Activated CD4-positive, alpha-beta memory T cell treated with anti-CD3 and anti-CD28 coated beads for 36 hours (primary cell): ENCODE measurements at regions of chr7 and their contacts with region 1.

Region 1: DNA sequence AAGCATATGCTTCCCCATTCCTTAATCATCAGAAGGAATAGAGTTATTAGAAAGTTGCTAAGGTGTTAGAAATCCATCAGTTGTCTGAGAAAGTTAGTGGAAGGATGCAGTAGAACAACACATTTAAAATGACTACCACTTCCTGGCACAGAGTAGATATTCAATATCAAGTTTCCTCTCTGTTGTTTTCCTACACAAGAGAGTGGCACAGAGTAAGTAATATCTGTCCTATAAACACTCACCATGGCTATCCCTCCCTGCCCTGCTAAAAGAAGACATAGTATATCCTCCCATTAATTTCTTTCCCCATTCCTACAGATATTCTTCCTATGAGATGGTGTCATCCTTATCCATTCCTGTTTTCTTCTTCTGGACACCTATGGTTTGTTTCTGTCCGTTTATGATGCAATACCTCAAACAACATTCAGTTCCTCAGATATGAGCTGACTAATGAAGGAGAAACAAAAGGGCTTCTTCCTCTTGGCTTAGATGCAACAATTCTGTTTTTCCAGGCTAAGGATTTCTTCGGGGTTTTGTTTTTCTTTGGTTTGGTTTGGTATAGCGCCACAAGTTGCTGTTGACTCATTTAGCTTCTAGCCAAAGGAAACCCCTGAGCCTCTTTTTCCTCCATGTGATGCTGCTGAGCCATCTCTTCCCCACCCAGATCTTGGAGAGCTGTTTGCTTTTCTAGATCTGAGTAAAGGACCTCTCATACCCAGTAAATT is 32.9 kb upstream of the BPGM start:
- DNase-seq: peak; percentile 61
- H3K4me3 Mint-ChIP-seq: no peak overlapping the region
- H3K27ac Mint-ChIP-seq: no peak overlapping the region
- H3K4me1 Mint-ChIP-seq: peaks cover 12% of the 10 kb centered on the region
- H3K27me3 Mint-ChIP-seq: peaks cover 15% of the 10 kb centered on the region

Region 2: GRCh38 chr7:134943764-134944400 is 330.1 kb after region 1 on chr7:
- CTCF ChIA-PET with region 1: no interaction called
- POLR2A ChIA-PET with region 1: no interaction called
- intact Hi-C with region 1: loop called (anchors 5 kb)
- DNase-seq: no peak
- H3K4me3 Mint-ChIP-seq: no peak overlapping the region
- H3K27ac Mint-ChIP-seq: no peak overlapping the region
- H3K4me1 Mint-ChIP-seq: peaks cover 6% of the 10 kb centered on the region
- H3K27me3 Mint-ChIP-seq: no peaks in the 10 kb centered on the region